Heart left ventricle (tissue), 16 donors: ENCODE measurements at regions of chr18 and their contacts with region 1.

Region 1: DNA sequence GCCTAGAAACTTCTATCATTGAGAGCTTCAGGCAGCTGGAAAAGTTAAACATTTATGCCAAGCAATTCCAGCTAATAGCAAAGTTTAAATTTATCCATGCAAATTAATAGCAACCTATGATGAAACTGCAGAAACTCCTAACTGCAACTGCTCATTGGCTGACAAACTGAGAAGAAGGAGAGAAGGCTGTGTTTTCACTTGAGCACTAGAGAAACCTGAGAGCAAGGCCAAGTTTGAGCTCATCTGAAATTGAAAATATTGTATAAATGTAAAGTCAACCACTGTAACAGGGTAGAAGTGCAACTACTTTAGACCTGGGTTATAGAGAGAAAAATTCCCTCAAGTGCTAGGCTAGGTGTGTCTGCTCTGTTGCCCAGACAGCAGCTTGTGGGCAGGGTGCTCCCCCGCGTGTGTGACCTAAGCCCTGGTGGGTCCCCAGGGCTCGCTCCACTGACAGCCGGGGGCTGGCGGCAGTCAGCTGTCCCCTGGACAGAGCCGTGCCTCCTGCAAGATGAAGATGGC is 50.2 kb downstream of the CABYR start:
- DNase-seq: no peak
- ATAC-seq: peak in 3 of 4 donors; percentile 37 to 57 (median 42)
- H3K4me3 ChIP-seq: no peak overlapping the region
- H3K27ac ChIP-seq: no peak overlapping the region
- H3K4me1 ChIP-seq: peaks cover 0 to 37% (median 21%) of the 10 kb centered on the region in 12 donors
- H3K27me3 ChIP-seq: no peaks in the 10 kb centered on the region
- CTCF ChIP-seq: no peak
- POLR2A ChIP-seq: no peak

Region 2: GRCh38 chr18:23752796-23753195 is 436.3 kb before region 1 on chr18:
- intact Hi-C with region 1: no loop called
- DNase-seq: no peak
- ATAC-seq: peak in 1 of 4 donors; percentile 57
- H3K4me3 ChIP-seq: no peak overlapping the region
- H3K27ac ChIP-seq: no peak overlapping the region
- H3K4me1 ChIP-seq: peaks cover 0 to 4% (median 0%) of the 10 kb centered on the region in 12 donors
- H3K27me3 ChIP-seq: no peaks in the 10 kb centered on the region
- CTCF ChIP-seq: no peak
- POLR2A ChIP-seq: no peak

Region 3: DNA sequence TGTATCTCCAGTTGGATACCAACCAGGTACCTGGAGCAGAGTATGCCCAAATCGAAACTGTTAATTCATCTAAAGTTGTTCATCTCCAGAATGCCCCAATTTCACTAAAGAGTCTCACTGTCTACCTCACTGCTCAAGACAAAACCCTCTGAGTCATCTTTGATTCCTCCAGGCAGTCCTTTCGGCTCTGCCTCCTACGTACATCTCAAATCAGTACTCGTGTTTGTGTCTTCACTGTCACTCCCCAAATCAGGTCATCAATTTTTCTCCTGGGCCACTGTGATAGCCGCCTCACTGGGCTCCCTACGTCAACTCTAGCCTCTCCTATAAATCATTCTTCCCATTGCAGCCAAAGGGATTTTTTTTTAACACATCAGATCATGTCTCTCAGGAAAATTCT is 216.7 kb before region 1 on chr18:
- intact Hi-C with region 1: no loop called
- DNase-seq: no peak
- ATAC-seq: no peak
- H3K4me3 ChIP-seq: no peak overlapping the region
- H3K27ac ChIP-seq: no peak overlapping the region
- H3K4me1 ChIP-seq: peaks cover 0 to 19% (median 0%) of the 10 kb centered on the region in 12 donors
- H3K27me3 ChIP-seq: no peaks in the 10 kb centered on the region
- CTCF ChIP-seq: no peak
- POLR2A ChIP-seq: no peak

Region 4: DNA sequence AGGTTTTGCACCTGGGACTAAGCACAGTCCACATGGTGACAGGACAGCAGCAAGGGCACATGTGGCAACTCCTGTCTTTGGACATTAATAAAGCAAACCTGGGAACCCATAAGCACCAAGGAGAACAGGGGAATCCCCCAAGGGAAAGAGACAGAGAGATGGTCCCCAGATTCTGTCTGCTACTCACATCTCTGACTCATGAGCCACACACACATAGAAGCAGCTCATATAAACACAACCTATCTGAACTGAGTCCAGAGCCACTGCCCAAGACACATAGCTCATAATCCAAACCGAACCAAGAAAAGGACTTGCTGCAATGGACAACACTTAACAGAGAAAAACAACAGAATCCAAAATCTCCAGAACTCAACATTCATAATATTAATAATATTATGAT is 126.1 kb after region 1 on chr18:
- intact Hi-C with region 1: loop called in 1 of 10 experiments (anchors 10 kb)
- DNase-seq: no peak
- ATAC-seq: no peak
- H3K4me3 ChIP-seq: no peak overlapping the region
- H3K27ac ChIP-seq: no peak overlapping the region
- H3K4me1 ChIP-seq: peaks cover 0 to 7% (median 0%) of the 10 kb centered on the region in 12 donors
- H3K27me3 ChIP-seq: no peaks in the 10 kb centered on the region
- CTCF ChIP-seq: no peak
- POLR2A ChIP-seq: no peak

Region 5: DNA sequence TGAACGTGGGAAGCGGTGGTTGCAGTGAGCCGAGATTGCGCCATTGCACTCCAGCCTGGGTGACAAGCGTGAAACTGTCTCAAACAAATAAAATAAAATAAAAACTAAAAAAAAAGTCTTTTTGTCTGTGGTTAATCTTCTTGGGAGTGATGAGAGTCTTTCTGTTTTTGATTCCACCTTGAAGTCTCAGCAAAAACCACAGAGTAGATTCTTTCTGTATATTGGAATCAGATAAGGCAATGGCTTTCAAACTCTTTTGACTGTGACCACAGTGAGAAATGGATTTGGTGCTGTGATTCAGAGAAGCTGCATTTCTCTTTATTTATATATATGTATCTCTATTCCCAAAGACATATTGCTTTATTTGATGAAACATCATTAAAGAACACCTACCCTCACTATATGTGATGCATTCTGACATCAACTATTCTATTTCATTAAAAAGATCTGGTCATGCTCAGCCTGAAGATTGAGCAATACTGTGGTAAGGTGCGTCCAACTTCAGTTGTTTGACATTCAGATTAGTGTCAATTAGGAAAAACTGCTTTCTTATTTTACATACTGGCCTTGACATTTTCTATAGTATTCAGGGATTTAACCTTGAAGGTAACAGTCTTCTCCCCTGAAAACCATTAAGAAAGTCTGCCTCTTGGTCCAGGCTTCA is 287.0 kb after region 1 on chr18:
- intact Hi-C with region 1: no loop called
- DNase-seq: no peak
- ATAC-seq: no peak
- H3K4me3 ChIP-seq: no peak overlapping the region
- H3K27ac ChIP-seq: no peak overlapping the region
- H3K4me1 ChIP-seq: no peaks in the 10 kb centered on the region
- H3K27me3 ChIP-seq: no peaks in the 10 kb centered on the region
- CTCF ChIP-seq: no peak
- POLR2A ChIP-seq: no peak